Thyroid gland (tissue), 4 donors: ENCODE measurements at regions of chr9 and their contacts with region 1.

Region 1: DNA sequence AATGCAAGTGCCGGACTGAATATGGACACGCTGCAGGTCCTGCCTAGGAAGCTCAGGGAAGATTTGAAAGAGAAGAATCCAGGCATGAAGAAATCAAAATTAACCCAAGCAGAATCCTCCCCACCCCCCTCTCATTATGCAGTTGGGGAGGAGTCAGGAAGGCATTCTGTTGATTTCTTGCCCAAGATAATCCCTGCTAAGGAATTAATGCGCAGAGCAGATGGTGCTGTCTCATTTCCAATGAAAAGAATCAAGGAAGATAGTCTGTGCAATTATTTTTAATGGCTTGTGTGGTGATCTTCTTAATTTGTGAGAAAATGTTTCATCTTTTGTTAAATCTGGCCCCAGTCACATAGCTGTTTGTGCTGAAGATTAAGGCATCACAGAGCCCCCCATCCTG is 145.0 kb downstream of the ZNF462 start:
- DNase-seq: no peak
- H3K4me3 ChIP-seq: no peak overlapping the region
- H3K27ac ChIP-seq: no peak overlapping the region
- H3K4me1 ChIP-seq: no peaks in the 10 kb centered on the region
- H3K27me3 ChIP-seq: no peaks in the 10 kb centered on the region
- CTCF ChIP-seq: no peak
- POLR2A ChIP-seq: no peak

Region 2: DNA sequence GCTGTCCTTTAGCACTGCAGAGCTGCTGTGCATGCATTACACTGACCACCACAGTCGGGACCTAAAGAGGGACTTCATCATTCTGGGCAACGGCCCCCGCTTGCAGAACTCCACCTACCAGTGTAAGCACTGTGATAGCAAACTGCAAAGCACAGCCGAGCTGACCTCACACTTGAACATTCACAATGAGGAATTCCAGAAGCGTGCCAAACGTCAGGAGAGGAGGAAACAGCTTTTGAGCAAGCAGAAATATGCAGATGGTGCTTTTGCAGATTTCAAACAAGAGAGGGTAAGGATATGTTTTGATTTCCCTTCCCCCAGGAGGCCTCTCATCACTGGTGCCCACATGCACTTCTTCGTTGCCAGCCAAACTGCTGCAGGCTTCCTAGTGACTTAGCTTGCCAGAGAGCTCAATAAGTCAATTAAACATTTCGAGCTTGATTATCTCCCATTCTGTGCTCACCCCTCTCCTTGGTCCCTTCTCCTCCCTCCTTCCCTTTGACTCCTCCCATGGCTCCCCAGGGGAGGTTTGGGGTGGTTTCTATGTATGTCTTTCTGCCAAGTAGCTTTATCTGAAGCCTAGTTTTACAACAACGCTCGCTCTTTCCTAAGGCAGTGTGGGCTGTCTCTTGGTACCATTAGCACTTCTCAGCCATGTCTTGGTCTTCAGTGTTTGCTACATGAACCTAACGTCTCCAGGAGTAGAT is 78.4 kb before region 1 on chr9:
- intact Hi-C with region 1: loop called (anchors 10 kb)
- DNase-seq: peak; percentile 78 to 85
- H3K4me3 ChIP-seq: no peak overlapping the region
- H3K27ac ChIP-seq: peak overlapping the region; percentile 76 to 79 (median 78)
- H3K4me1 ChIP-seq: peaks cover 14 to 18% of the 10 kb centered on the region in 2 donors
- H3K27me3 ChIP-seq: no peaks in the 10 kb centered on the region
- CTCF ChIP-seq: no peak
- POLR2A ChIP-seq: peak in 1 of 2 donors; percentile 42